Right ventricle myocardium superior (tissue), 1 donor: ENCODE measurements at regions of chr12 and their contacts with region 1.

Region 1: GRCh38 chr12:67943226-67943892 is 45.9 kb upstream of the IFNG-AS1 start:
- DNase-seq: no peak
- ATAC-seq: peak; percentile 89

Region 2: GRCh38 chr12:67355578-67356379 is 587.6 kb before region 1 on chr12:
- intact Hi-C with region 1: loop called (anchors 5 kb)
- DNase-seq: no peak
- ATAC-seq: peak; percentile 75

Region 3: DNA sequence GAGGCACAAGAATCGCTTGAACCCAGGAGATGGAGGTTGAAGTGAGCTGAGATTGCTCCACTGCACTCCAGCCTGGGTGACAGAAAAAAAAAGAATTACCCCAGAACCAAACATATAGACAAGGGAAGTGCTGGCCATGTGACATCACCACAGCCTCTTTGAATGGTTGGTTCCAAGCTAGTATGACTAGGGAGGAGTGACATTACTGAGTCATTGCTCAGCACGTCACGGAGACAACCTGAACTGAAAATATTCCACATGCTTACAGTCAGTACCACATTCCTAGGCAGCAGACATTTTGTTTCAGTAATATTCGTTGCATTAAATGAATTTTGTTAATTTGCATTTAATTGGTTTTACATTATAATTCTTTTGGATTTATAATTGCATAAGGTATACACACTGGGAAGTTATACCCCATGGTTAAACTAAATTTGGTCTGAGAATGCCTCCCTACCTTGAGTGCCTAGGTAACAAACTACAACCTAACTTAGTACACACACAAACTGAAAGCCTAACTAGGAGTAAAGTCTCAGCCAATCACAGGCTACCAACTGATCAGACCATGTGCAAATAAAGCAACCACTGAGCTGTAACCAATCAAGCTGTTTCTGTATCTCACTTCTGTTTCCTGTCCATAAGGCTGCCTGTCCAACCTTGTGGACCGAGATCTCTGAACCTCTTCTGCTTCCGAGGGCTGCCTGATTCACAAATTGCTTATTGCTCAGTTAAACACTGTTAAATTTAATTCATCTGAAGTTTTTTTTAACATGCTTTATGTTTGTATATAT is 509.8 kb before region 1 on chr12:
- intact Hi-C with region 1: loop called (anchors 5 kb)
- DNase-seq: no peak
- ATAC-seq: no peak

Region 4: GRCh38 chr12:67649570-67650387 is 293.6 kb before region 1 on chr12:
- intact Hi-C with region 1: loop called (anchors 5 kb)
- DNase-seq: peak; percentile 62
- ATAC-seq: peak; percentile 58